ENCODE measurements at regions of chr1 and their contacts with region 1.

Region 1: GRCh38 chr1:3727042-3727824 is 25.0 kb upstream of the CCDC27 start:
- DNase-seq: peak in 1 of 5 donors; percentile 63
- ATAC-seq: peak in 3 of 4 donors; percentile 5 to 41 (median 36)
- H3K4me3 ChIP-seq: no peak overlapping the region
- H3K27ac ChIP-seq: no peak overlapping the region
- H3K4me1 ChIP-seq: peaks cover 0 to 11% (median under 1%) of the 10 kb centered on the region in 12 donors
- H3K27me3 ChIP-seq: peaks cover 0 to 25% (median 3%) of the 10 kb centered on the region in 9 donors
- CTCF ChIP-seq: peak in 10 of 12 donors; percentile 11 to 44 (median 22)
- POLR2A ChIP-seq: no peak

Region 2: GRCh38 chr1:3491291-3492246 is 235.7 kb before region 1 on chr1:
- intact Hi-C with region 1: loop called in 3 of 10 experiments (anchors 10 kb)
- DNase-seq: peak; percentile 71 to 90 (median 76)
- ATAC-seq: peak; percentile 60 to 87 (median 82)
- H3K4me3 ChIP-seq: peak overlapping the region in 1 of 12 donors; percentile 22
- H3K27ac ChIP-seq: no peak overlapping the region
- H3K4me1 ChIP-seq: peaks cover 0 to 8% (median 0%) of the 10 kb centered on the region in 12 donors
- H3K27me3 ChIP-seq: peaks cover 0 to under 1% (median 0%) of the 10 kb centered on the region in 9 donors
- CTCF ChIP-seq: peak; percentile 99 to 100 (median 100)
- POLR2A ChIP-seq: no peak

Region 3: GRCh38 chr1:3564921-3565827 is 162.1 kb before region 1 on chr1:
- intact Hi-C with region 1: loop called in 6 of 10 experiments (anchors 5 to 10 kb)
- DNase-seq: no peak
- ATAC-seq: peak in 3 of 4 donors; percentile 21 to 56 (median 47)
- H3K4me3 ChIP-seq: no peak overlapping the region
- H3K27ac ChIP-seq: no peak overlapping the region
- H3K4me1 ChIP-seq: peaks cover 0 to 2% (median 0%) of the 10 kb centered on the region in 12 donors
- H3K27me3 ChIP-seq: peaks cover 0 to 13% (median 0%) of the 10 kb centered on the region in 9 donors
- CTCF ChIP-seq: peak; percentile 74 to 94 (median 86)
- POLR2A ChIP-seq: no peak

Region 4: DNA sequence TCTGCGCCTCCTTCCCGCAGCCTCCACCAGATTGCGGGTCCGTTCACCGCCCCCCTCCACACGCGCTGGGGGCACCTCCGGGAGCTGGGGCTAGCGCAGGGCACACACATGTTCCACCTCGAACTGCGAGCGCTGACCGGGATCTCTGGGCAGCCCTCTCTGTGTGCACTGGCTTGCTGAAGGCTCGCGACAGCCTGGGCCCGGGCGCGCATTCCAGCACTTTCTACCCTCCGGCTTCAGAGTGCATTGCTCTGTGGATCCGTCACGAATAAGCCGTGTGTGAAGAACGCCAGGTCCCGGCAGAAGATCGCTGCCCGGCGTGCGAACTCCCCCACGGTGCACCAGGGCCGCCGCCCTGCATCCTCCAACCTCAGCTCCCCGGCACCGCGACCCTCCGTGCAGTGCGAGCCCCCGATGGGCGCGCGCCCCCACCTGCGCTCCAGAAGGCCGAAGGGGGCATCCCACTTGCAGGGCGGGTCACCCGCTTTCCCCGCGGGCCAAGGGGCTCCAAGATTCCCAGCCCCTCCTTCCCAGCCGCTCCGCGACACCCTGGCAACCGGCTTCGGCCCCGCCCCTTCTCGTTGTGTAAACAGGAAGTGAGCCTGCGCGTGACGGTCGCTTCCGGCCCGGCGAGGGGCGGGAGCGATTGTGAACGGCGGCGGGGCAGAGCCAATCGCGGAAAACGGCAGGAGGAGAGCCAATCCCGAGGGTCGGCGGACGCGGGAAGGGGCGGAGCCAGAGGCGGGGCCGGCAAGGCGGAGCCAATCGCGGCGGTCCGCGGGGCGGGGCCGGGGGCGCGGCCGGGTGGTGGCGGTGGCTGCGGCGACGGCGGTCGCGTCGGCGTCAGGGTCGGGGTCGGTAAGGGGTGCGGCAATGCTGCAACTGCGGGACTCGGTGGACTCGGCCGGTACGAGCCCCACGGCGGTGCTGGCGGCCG is 102.8 kb before region 1 on chr1 and contains the start of gene TPRG1L:
- intact Hi-C with region 1: loop called in 3 of 10 experiments (anchors 1 to 10 kb)
- DNase-seq: peak; percentile 98 to 100 (median 99)
- ATAC-seq: peak; percentile 97 to 99 (median 98)
- H3K4me3 ChIP-seq: peak within 1 kb of the TSS; percentile 71 to 99 (median 96)
- H3K27ac ChIP-seq: peak within 1 kb of the TSS; percentile 56 to 88 (median 80)
- H3K4me1 ChIP-seq: peaks cover 0 to 34% (median 24%) of the 10 kb centered on the region in 12 donors
- H3K27me3 ChIP-seq: no peaks in the 10 kb centered on the region
- CTCF ChIP-seq: no peak
- POLR2A ChIP-seq: peak in 1 of 2 donors; percentile 59
- total RNA-seq, gene TPRG1L: 32.0 to 58.0 (median 48.8) TPM

Region 5: GRCh38 chr1:3649342-3650247 is 77.6 kb before region 1 on chr1 and contains the start of gene WRAP73:
- intact Hi-C with region 1: loop called in 1 of 10 experiments (anchors 10 kb)
- DNase-seq: peak; percentile 90 to 94 (median 93)
- ATAC-seq: peak; percentile 92 to 95 (median 94)
- H3K4me3 ChIP-seq: peak within 1 kb of the TSS; percentile 53 to 99 (median 92)
- H3K27ac ChIP-seq: peak within 1 kb of the TSS in 8 of 12 donors; percentile 19 to 65 (median 56)
- H3K4me1 ChIP-seq: peaks cover 6 to 45% (median 30%) of the 10 kb centered on the region in 12 donors
- H3K27me3 ChIP-seq: peaks cover 26 to 45% (median 33%) of the 10 kb centered on the region in 9 donors
- CTCF ChIP-seq: peak in 4 of 12 donors; percentile 8 to 41 (median 26)
- POLR2A ChIP-seq: peak; percentile 21 to 85
- total RNA-seq, gene WRAP73: 8.5 to 21.6 (median 11.3) TPM

Region 6: DNA sequence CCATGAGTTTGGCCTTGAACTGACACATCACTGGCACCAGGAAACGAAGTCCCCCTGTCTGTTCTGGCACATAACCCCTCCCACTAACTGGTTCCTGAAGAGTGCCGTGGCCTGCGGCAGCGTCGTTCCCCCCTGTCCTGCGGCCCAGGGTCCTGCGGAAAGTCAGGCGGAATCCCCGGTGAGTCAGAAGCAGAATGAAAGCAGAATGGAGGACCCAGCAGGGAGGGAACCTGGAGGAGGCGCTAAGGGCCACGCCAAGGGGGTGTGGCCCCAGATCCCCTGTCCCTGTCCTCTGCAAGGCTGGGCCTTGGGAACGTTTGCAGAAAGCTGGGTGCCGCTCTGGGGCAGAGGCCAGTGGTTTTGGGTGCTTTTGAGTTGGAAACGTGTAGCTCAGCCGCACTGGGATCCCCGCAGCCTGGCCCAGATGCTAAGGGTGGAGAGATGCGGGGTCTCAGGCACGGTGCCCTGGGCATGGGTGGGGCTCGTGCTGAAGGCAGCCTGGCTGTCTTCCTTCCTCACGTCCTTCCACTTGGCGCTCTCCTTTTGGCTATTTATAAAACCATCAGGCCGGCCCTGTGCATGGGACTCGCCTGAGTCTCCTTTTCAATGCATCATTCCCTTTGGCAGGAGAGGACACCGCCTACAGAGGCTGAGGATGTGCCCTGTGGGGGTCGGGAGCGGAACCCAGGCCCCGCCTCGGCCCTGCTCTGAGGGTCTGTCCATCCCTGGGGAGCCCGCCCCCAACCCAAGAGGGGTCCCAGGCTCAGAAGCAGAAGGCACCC is 38.7 kb before region 1 on chr1:
- intact Hi-C with region 1: loop called in 1 of 10 experiments (anchors 5 kb)
- DNase-seq: no peak
- ATAC-seq: no peak
- H3K4me3 ChIP-seq: no peak overlapping the region
- H3K27ac ChIP-seq: no peak overlapping the region
- H3K4me1 ChIP-seq: peaks cover 0 to 17% (median 0%) of the 10 kb centered on the region in 12 donors
- H3K27me3 ChIP-seq: peaks cover 0 to 29% (median 5%) of the 10 kb centered on the region in 9 donors
- CTCF ChIP-seq: no peak
- POLR2A ChIP-seq: no peak

Region 7: GRCh38 chr1:3695326-3696217 is 31.7 kb before region 1 on chr1:
- intact Hi-C with region 1: loop called in 7 of 10 experiments (anchors 1 to 2 kb)
- DNase-seq: peak; percentile 40 to 82 (median 53)
- ATAC-seq: peak; percentile 50 to 92 (median 77)
- H3K4me3 ChIP-seq: peak overlapping the region in 2 of 12 donors; percentile 12 to 22
- H3K27ac ChIP-seq: no peak overlapping the region
- H3K4me1 ChIP-seq: peaks cover 0 to 5% (median 0%) of the 10 kb centered on the region in 12 donors
- H3K27me3 ChIP-seq: peaks cover 0 to 41% (median 4%) of the 10 kb centered on the region in 9 donors
- CTCF ChIP-seq: peak; percentile 66 to 90 (median 78)
- POLR2A ChIP-seq: no peak